Heart right ventricle (tissue), 16 donors: ENCODE measurements at regions of chr19 and their contacts with region 1.

Region 1: GRCh38 chr19:20044663-20045062 is 5.4 kb upstream of the ZNF682 start:
- DNase-seq: no peak
- ATAC-seq: peak in 4 of 8 donors; percentile 60 to 76 (median 66)
- H3K4me3 ChIP-seq: no peak overlapping the region
- H3K27ac ChIP-seq: no peak overlapping the region
- H3K4me1 ChIP-seq: peaks cover 0 to 20% (median 0%) of the 10 kb centered on the region in 9 donors
- H3K27me3 ChIP-seq: no peaks in the 10 kb centered on the region
- CTCF ChIP-seq: no peak

Region 2: DNA sequence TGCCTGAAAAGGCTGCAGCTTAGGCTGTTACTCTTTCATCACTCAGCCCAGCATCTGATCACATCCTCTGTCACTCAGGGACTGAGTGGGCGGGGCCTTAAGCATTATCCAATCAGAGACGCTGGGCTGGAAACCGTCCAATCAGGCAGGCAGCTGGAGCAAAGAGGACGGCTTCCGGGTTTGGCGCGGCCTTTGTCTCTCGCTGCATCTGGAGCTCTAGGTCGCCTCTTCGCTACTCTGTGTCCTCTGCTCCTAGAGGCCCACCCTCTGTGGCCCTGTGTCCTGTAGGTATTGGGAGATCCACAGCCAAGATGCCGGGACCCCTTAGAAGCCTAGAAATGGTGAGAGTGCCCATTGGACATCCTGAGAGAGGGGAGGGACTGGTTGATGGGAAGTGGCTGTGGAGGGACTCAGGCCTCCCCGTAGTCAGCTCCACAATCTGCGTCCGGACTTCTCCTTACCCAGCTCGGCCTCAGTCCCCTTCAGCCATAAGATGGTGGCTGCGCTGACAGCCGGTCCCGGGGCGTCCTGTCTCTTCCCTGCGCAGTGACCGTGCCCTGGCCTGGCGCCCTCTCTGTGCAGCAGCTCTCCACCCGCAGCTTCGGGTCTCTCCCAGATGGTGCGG is 122.5 kb after region 1 on chr19 and contains the start of gene ZNF486:
- intact Hi-C with region 1: loop called in 1 of 10 experiments (anchors 10 kb)
- DNase-seq: peak; percentile 94 to 97
- ATAC-seq: peak; percentile 97 to 99 (median 98)
- H3K4me3 ChIP-seq: peak within 1 kb of the TSS; percentile 61 to 87 (median 76)
- H3K27ac ChIP-seq: peak within 1 kb of the TSS in 9 of 10 donors; percentile 54 to 87 (median 71)
- H3K4me1 ChIP-seq: peaks cover 0 to 17% (median 9%) of the 10 kb centered on the region in 9 donors
- H3K27me3 ChIP-seq: no peaks in the 10 kb centered on the region
- CTCF ChIP-seq: no peak
- total RNA-seq, gene ZNF486: 1.0 to 2.6 (median 2.3) TPM